HepG2 (cell line): ENCODE measurements at regions of chr1 and their contacts with region 1.

Region 1: DNA sequence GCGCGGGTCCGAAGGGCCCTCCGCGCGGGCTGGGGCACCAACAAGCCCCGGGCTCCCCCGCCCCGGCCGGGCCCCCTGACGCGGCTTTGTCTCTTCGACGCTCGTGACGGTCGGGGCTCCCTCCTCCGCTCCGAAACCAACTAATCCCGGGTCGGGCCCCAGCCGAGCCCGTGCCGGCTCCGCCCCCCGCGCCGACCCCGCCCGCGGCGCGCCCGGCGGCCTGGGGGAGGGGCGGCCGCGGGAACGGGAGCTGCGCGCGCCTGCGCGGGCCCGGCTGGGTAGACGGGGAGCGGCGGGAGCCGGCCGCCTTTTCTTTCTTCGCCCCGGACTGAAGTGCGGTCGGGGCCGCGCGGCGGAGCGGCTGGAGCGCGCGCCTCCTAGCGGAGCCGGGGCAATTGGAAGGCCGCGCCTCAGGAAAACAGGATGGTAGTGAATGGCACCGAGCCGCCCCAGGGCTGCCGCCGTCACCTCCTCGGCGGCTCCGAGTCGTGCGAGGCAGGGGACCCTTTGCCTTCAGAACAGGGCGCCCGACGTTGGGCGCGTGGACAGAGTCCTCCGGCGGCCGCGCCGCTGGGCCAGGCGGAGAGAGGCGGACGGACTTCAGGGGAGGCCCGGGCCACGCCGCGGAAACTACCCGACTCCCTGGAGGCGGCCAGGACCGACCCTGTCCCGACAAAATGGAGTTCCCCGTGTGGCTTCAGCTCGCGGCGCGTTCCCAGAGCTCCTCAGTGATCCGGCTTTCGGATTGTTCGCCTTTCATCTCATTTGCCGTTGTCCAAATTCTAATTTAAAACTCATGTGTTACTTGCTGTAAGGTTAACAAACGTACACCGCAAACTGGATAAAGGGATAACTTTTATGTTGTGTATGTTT is at the start of gene TP53BP2:
- DNase-seq: peak; percentile 76
- ATAC-seq: peak; percentile 92
- H3K4me3 ChIP-seq: peak within 1 kb of the TSS; percentile 84 to 93 (median 88)
- H3K27ac ChIP-seq: peak within 1 kb of the TSS; percentile 100
- H3K4me1 ChIP-seq: peaks cover 28% of the 10 kb centered on the region
- H3K27me3 ChIP-seq: peaks cover 1 to 15% of the 10 kb centered on the region in 2 experiments; a peak in 3 of 5 replicates
- CTCF ChIP-seq: peak; percentile 86
- EP300 ChIP-seq: peak in 1 of 2 experiments; percentile 21; a peak in 2 of 4 replicates
- POLR2A ChIP-seq: peak; percentile 73 to 86
- RAD21 ChIP-seq: peak; percentile 83
- total RNA-seq, gene TP53BP2: 14.0 and 15.0 TPM in 2 replicates

Region 2: DNA sequence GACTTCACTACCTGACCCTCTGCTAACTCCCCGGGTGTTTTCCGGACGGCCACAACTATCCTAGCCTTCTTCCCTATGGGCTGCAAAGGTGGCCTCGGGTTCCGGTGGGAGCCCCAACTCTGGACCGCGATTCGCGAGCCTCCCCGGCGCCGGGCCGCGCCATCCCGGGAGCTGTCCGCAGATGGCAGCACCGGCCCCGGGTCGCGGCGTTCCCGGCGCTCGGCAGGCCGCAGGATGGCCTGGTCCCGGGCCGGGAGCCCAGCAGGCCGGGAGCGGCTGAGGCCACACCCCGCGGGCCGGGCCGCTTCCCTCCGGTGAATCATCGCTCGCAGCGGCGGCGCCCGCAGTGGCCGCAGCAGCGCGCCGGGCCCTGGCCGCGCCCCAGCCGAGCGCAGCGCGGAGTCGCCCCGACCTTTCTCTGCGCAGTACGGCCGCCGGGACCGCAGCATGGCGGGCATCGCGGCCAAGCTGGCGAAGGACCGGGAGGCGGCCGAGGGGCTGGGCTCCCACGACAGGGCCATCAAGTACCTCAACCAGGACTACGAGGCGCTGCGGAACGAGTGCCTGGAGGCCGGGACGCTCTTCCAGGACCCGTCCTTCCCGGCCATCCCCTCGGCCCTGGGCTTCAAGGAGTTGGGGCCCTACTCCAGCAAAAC is 133.7 kb before region 1 on chr1 and contains the start of gene CAPN2:
- CTCF ChIA-PET with region 1: no interaction called
- POLR2A ChIA-PET with region 1: interaction called, 11 read pairs
- in situ Hi-C with region 1: no loop called
- intact Hi-C with region 1: loop called (anchors 10 kb)
- DNase-seq: no peak
- ATAC-seq: peak; percentile 92
- H3K4me3 ChIP-seq: peak within 1 kb of the TSS; percentile 52 to 81 (median 68)
- H3K27ac ChIP-seq: no peak within 1 kb of the TSS
- H3K4me1 ChIP-seq: peaks cover 66% of the 10 kb centered on the region
- H3K27me3 ChIP-seq: peaks cover 5 to 55% of the 10 kb centered on the region in 2 experiments; a peak in 4 of 5 replicates
- CTCF ChIP-seq: peak; percentile 67
- EP300 ChIP-seq: no peak
- POLR2A ChIP-seq: no peak
- RAD21 ChIP-seq: peak; percentile 89
- total RNA-seq, gene CAPN2: 6.2 and 7.8 TPM in 2 replicates

Region 3: GRCh38 chr1:223765036-223765718 is 80.9 kb before region 1 on chr1:
- CTCF ChIA-PET with region 1: no interaction called
- POLR2A ChIA-PET with region 1: interaction called, 15 read pairs
- in situ Hi-C with region 1: no loop called
- intact Hi-C with region 1: no loop called
- DNase-seq: peak; percentile 93
- ATAC-seq: peak; percentile 92
- H3K4me3 ChIP-seq: peak overlapping the region; percentile 7 to 53 (median 20); a peak in 4 of 6 replicates
- H3K27ac ChIP-seq: peak overlapping the region; percentile 40
- H3K4me1 ChIP-seq: peaks cover 28% of the 10 kb centered on the region
- H3K27me3 ChIP-seq: no peaks in the 10 kb centered on the region
- CTCF ChIP-seq: no peak
- EP300 ChIP-seq: peak in 1 of 2 experiments; percentile 65; a peak in 2 of 4 replicates
- POLR2A ChIP-seq: peak in 1 of 2 experiments; percentile 56; a peak in 2 of 4 replicates
- RAD21 ChIP-seq: no peak

Region 4: DNA sequence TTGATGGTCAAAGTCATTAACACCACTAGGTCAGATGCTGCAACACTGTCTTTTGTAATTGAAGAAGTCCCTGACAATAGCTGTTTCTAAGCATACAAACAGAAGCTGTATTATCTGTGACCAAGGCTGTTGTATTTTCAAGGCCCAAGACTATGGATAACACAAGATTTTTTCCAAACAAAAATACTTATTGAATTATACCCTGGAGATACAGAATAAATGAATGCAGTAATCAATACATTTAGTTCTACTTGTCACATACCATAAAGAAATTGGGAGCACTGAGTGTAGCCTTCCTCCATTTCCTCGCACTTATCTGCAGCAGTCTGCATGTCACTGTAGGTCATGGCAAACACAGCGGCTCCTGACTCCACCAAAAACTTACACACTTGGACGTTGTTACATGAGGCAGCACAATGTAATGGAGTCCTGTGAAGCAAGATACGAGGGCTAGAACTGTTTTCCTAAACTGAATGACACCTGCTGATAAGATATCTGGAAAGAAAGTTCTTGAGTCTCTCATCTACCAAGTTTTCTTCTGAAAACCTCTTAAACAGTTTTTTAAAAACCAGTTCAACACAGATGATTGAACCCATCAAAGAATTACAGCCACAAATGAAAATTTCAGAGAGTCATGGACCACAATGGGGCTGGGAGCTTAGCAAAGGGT is 57.2 kb before region 1 on chr1:
- CTCF ChIA-PET with region 1: no interaction called
- POLR2A ChIA-PET with region 1: no interaction called
- in situ Hi-C with region 1: no loop called
- intact Hi-C with region 1: no loop called
- DNase-seq: no peak
- ATAC-seq: no peak
- H3K4me3 ChIP-seq: no peak overlapping the region
- H3K27ac ChIP-seq: no peak overlapping the region
- H3K4me1 ChIP-seq: no peaks in the 10 kb centered on the region
- H3K27me3 ChIP-seq: no peaks in the 10 kb centered on the region
- CTCF ChIP-seq: no peak
- EP300 ChIP-seq: no peak
- POLR2A ChIP-seq: no peak
- RAD21 ChIP-seq: no peak

Region 5: DNA sequence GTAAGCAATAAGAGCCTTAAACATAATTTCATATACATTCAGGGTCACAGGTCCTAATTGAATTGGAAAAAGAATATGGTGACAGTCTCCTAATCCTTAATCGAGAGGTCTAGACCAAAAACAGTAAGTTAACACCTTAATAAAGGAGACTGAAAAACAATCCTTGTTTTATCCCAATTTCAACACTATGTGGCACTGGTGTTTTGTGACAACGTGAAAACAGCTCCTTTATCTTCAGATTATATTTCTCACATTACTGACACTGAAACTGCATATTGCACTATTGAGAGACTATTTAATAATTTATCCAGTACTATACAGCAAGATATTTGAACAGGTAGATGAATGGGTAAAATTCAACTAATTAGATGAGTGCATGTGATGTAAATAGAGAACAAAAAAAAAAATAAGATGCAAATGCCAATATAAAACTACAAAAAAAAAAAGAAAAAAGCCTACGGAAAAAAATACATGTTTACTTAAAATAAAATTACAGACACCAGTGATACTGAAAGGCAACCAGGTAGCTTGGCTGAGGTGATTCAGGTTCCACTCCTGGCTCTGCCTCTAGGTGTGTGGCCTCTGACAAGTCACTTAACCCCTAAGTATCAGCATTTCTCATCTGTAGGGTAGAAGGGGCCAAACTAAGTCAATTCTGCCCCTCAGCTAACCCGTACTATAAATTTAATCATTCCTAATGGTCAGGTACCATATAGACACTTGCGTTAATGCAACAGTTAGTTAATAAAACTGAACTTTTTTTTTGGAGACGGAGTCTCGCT is 34.2 kb before region 1 on chr1:
- CTCF ChIA-PET with region 1: no interaction called
- POLR2A ChIA-PET with region 1: no interaction called
- in situ Hi-C with region 1: no loop called
- intact Hi-C with region 1: loop called (anchors 2 kb)
- DNase-seq: peak; percentile 16
- ATAC-seq: no peak
- H3K4me3 ChIP-seq: no peak overlapping the region
- H3K27ac ChIP-seq: no peak overlapping the region
- H3K4me1 ChIP-seq: peaks cover 10% of the 10 kb centered on the region; the same call in 1 of the 2 replicates
- H3K27me3 ChIP-seq: no peaks in the 10 kb centered on the region
- CTCF ChIP-seq: peak; percentile 51
- EP300 ChIP-seq: no peak
- POLR2A ChIP-seq: no peak
- RAD21 ChIP-seq: peak; percentile 45; the same call in 1 of the 2 replicates

Region 6: GRCh38 chr1:223860051-223860622 is 14.1 kb after region 1 on chr1:
- CTCF ChIA-PET with region 1: no interaction called
- POLR2A ChIA-PET with region 1: no interaction called
- in situ Hi-C with region 1: no loop called
- intact Hi-C with region 1: no loop called
- DNase-seq: no peak
- ATAC-seq: no peak
- H3K4me3 ChIP-seq: no peak overlapping the region
- H3K27ac ChIP-seq: no peak overlapping the region
- H3K4me1 ChIP-seq: no peaks in the 10 kb centered on the region
- H3K27me3 ChIP-seq: peaks cover 0 to 6% of the 10 kb centered on the region in 2 experiments; a peak in 1 of 5 replicates
- CTCF ChIP-seq: no peak
- EP300 ChIP-seq: no peak
- POLR2A ChIP-seq: no peak
- RAD21 ChIP-seq: no peak

Region 7: GRCh38 chr1:223878598-223879325 is 32.7 kb after region 1 on chr1:
- CTCF ChIA-PET with region 1: no interaction called
- POLR2A ChIA-PET with region 1: no interaction called
- in situ Hi-C with region 1: no loop called
- intact Hi-C with region 1: no loop called
- DNase-seq: no peak
- ATAC-seq: no peak
- H3K4me3 ChIP-seq: no peak overlapping the region
- H3K27ac ChIP-seq: no peak overlapping the region
- H3K4me1 ChIP-seq: no peaks in the 10 kb centered on the region
- H3K27me3 ChIP-seq: no peaks in the 10 kb centered on the region
- CTCF ChIP-seq: no peak
- EP300 ChIP-seq: no peak
- POLR2A ChIP-seq: no peak
- RAD21 ChIP-seq: no peak

Region 8: DNA sequence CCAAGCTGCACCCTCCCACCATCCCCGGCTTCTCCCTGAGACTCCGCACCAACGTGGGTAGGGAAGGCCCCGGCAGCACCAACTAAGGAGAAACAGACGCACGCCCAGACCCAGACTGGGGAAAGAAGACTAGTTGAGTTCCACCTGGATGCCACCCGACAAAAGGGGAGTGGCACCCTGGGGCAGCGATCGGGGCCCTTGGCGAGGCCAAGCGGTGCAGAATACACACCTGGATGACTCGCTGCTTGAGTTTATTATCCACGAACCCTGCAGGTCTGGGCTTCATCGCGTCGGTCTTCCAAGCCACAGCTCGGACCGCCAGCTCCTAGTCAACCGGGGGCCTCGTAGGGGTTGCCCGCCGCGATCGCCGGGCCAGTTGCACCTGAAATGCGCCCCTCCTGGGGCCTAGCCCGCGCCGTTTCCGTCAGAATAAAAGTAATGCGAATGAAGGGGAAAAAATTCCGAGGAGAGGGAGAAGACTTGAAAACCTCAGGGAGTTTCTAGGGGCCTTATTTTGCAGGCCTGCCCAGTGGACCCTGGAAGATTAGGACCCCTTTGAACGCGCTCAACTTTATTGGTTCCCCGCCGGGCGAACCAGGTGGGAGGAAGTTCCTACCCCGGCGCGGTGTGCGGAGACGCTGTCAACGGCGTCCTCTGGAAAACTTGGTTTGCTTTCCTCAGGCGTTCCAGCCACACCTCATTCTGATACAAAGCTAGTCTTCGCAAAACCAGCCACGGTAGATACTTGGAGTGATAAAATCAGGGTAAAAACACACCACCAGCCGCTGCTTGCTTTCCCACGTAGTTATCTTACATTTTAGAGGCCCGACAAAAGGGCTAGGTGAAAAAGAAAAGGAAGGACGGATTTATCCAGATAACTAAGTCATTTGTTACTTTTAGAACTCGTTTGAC is 484.1 kb after region 1 on chr1 and contains the start of gene NVL:
- CTCF ChIA-PET with region 1: no interaction called
- POLR2A ChIA-PET with region 1: no interaction called
- in situ Hi-C with region 1: no loop called
- intact Hi-C with region 1: loop called (anchors 10 kb)
- DNase-seq: peak; percentile 82
- ATAC-seq: peak; percentile 97
- H3K4me3 ChIP-seq: peak within 1 kb of the TSS; percentile 76 to 94 (median 81)
- H3K27ac ChIP-seq: peak within 1 kb of the TSS; percentile 93
- H3K4me1 ChIP-seq: peaks cover 15% of the 10 kb centered on the region
- H3K27me3 ChIP-seq: no peaks in the 10 kb centered on the region; a peak in 1 of 5 replicates
- CTCF ChIP-seq: no peak
- EP300 ChIP-seq: peak in 1 of 2 experiments; percentile 37; a peak in 1 of 4 replicates
- POLR2A ChIP-seq: peak; percentile 42 to 60
- RAD21 ChIP-seq: no peak
- total RNA-seq, gene NVL: 18.2 and 21.0 TPM in 2 replicates